Psoas muscle (tissue), 8 donors: ENCODE measurements at regions of chr11 and their contacts with region 1.

Region 1: DNA sequence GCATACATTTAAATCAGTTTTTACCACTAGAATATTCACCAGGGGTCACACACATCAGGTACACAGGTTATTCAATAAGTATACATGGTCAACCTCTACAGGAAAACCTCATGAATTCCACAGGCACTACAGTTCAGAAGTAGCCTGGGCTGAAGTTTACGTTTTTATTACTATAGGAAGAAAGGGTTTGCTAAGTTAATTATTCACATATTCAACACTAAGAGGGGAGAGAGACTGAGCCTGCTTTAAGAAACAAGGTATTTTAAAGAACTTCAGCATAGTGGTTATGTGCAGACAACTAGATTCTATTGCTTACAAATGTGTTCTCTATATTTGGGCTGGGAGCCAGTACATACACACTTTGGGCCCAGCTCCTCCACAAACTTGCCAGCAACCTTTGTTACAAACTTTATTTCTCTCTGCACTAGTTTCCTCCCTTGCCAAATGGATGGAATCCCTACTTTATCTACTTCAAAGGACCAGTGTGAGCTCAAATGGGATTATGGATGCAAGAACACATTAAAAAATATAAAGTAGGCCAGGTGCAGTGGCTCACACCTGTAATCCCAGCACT is 31.9 kb downstream of the IL18BP start:
- DNase-seq: no peak
- ATAC-seq: no peak
- H3K4me3 ChIP-seq: peak overlapping the region; percentile 5
- H3K27ac ChIP-seq: no peak overlapping the region
- H3K4me1 ChIP-seq: peaks cover 62% of the 10 kb centered on the region
- H3K27me3 ChIP-seq: no peaks in the 10 kb centered on the region
- CTCF ChIP-seq: no peak

Region 2: DNA sequence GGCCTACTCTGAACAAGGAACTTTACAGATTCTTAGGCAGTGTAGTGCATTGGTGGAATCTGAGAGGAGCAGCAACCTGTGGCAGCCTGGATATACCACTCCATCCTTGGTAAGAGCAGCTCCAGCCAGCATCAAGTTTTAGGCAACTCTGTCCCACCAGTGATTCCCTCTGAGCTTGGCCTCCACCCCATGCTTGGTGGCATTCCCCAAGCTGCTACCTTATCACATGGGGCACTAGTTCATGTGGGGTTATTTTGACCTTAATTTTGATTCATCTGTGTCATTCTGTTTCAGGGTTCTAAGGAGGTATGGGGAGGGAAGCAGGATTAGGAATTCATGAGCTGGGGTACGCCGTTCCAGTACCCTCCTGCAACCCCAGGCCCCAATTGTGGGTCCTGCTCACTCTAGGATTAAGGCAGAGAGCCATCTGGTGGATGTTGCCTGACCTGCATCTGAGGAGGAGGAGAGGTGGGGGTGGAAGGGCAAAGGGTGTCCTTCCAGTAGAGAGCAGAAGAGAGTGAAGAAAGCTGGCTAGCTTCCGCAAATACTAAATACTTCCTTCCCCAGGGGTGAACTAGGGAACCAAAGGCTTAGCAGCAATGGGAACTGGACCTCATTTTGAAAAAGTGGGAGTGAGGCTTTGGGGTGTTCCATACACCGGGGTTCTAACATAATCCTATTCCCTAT is 60.6 kb after region 1 on chr11:
- intact Hi-C with region 1: loop called (anchors 1 to 2 kb)
- DNase-seq: peak; percentile 67 to 84
- ATAC-seq: peak; percentile 89 to 96 (median 91)
- H3K4me3 ChIP-seq: no peak overlapping the region
- H3K27ac ChIP-seq: peak overlapping the region; percentile 1
- H3K4me1 ChIP-seq: peaks cover 4% of the 10 kb centered on the region
- H3K27me3 ChIP-seq: no peaks in the 10 kb centered on the region
- CTCF ChIP-seq: peak; percentile 85